ENCODE measurements at regions of chr3 and their contacts with region 1.

Region 1: DNA sequence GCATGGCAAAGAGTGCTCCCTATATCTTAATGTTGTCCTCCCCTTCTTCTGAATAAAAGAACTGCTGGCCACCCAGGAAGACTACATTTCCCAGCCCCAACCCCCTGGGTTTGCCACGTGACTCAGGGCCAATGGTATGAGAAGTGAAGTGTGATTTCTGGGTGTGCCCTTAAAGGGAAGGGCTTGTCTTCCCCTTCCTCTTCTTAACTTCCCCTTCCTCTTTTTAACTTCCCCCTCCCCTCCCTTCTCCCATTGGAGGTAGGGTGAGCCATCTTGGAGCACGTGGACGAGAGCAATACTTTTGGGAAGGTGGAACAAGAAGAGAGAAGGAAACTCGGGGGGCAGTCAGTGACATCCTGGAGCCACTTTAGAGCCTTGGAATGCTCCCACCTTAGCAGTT is 6.8 kb upstream of the KBTBD12 start:
- H3K4me3 Mint-ChIP-seq: no peak overlapping the region
- H3K27ac Mint-ChIP-seq: peak overlapping the region; percentile 78
- H3K4me1 Mint-ChIP-seq: peaks cover 52% of the 10 kb centered on the region
- H3K27me3 Mint-ChIP-seq: peaks cover 25% of the 10 kb centered on the region

Region 2: DNA sequence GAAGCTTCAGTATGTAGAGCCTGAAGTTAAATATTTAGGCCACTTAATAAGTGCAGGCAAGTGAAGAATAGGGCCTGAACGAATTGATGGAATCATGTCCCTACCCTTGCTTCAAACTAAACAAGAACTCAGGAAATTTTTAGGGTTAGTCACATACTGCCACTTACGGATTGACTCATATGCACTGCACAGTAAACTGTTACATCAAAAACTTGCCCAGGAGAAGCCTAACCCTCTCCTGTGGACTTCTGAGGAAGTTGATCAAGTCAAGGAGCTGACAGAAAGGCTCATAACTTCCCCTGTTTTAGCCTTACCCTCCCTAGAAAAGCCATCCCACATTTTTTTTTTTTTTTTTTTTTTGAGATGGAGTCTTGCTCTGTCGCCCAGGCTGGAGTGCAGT is 13.7 kb before region 1 on chr3:
- intact Hi-C with region 1: loop called (anchors 2 kb)
- H3K4me3 Mint-ChIP-seq: no peak overlapping the region
- H3K27ac Mint-ChIP-seq: peak overlapping the region; percentile 39
- H3K4me1 Mint-ChIP-seq: peaks cover 25% of the 10 kb centered on the region
- H3K27me3 Mint-ChIP-seq: peaks cover 7% of the 10 kb centered on the region